PC-9 (cell line): ENCODE measurements at regions of chr18 and their contacts with region 1.

Region 1: DNA sequence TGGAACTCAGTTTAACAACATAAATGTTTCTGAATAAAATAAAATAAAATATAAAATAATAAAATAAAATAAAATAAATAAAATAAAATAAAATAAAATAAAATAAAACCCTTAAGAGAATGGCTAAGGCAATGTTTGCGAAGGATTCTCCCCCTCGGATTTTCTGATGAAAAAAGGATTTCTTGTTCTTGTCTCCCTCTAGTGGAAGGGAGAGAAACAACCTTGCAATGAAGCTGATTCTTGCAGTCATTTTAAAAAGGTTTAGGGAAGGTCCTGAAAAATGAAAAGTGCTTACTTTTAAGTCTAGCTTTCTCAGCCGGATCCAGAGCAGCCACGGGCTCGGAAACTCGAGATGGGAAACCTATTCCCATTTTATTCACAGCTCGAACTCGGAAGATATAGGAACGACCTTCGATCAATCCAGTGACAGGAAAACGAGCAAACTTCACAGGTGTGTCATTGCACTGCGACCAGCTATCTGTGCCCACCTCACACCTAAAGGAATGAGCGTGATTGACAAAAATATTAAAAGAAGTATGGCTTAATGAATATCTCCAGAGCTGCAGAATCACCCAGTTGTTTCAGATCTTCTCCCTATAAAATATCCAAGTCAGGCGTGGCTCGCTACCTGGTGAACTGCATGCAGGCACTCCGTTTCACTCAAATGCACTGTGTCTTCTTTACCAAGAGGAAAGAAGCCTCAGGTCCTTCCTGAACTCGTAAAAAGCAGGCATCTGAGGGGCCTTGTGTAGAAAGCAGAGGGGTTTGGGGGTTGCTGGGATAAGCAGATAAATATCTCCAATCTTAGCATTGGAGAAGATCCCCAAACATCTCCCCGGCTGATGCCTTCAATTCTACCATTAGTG is 68.1 kb downstream of the MYOM1 start:
- DNase-seq: no peak
- H3K4me3 ChIP-seq: no peak overlapping the region
- H3K27ac ChIP-seq: no peak overlapping the region
- H3K4me1 ChIP-seq: peaks cover 9% of the 10 kb centered on the region; the same call in 1 of the 2 replicates
- H3K27me3 ChIP-seq: no peaks in the 10 kb centered on the region
- CTCF ChIP-seq: peak; percentile 91

Region 2: DNA sequence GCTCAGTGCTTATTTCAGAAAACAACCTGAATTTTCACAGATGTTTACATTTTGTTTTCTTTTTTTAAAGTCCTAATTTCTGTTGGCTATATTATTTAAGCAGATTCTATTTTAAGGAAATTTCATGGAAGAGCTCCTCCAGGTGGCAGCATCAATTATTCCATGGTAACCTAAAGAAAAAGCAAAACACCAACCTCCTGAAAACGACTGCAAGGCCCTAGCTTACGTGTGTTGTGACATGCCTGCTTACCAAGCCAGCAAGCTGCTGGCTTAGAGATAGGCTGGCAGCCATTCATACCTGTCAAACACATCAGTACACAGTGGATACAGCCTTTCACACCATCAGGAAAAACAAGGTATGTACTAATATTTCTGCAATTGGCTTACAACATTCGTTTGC is 203.6 kb before region 1 on chr18:
- CTCF ChIA-PET with region 1: interaction called, 4 read pairs
- POLR2A ChIA-PET with region 1: no interaction called
- intact Hi-C with region 1: loop called (anchors 5 kb)
- DNase-seq: no peak
- H3K4me3 ChIP-seq: no peak overlapping the region
- H3K27ac ChIP-seq: no peak overlapping the region
- H3K4me1 ChIP-seq: no peaks in the 10 kb centered on the region
- H3K27me3 ChIP-seq: no peaks in the 10 kb centered on the region
- CTCF ChIP-seq: peak; percentile 53